Naive thymus-derived CD8-positive, alpha-beta T cell (primary cell): ENCODE measurements at regions of chr1 and their contacts with region 1.

Region 1: DNA sequence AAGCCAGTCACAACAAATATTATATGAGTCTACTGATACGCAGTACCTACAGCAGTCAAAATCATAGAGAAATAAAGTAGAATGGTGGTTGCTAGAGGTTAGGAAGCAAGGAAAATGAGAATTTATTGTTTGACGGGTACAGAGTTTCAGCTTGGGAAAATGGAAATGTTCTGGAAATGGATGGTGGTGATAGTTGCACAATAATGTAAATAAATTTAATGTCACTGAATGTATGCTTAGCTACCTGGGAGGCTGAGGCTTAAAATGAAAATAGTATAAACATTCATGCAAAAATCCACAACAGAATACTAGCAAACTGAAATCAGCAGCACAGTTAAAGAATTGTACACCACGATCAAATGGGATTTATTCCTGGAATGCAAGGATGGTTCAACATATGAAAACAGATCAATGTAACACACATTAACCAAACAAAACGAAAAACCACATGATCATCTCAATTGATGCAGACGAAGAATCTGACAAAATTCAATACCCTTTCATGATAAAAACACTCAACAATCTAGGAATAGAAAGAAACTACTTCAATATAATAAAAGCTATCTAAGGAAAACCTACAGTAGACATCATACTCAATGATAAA is 10.7 kb downstream of the TUT4 start:
- DNase-seq: peak in 1 of 10 donors; percentile 4
- ATAC-seq: no peak
- H3K4me3 Mint-ChIP-seq: no peak overlapping the region
- H3K27ac Mint-ChIP-seq: peak overlapping the region in 3 of 10 donors; percentile 34 to 66 (median 37)
- H3K4me1 Mint-ChIP-seq: peaks cover 14 to 45% (median 30%) of the 10 kb centered on the region in 4 donors
- H3K27me3 Mint-ChIP-seq: no peaks in the 10 kb centered on the region

Region 2: GRCh38 chr1:52531249-52531872 is 10.8 kb before region 1 on chr1:
- POLR2A ChIA-PET with region 1: no interaction called
- DNase-seq: no peak
- ATAC-seq: no peak
- H3K4me3 Mint-ChIP-seq: no peak overlapping the region
- H3K27ac Mint-ChIP-seq: peak overlapping the region in 2 of 10 donors; percentile 22 to 67
- H3K4me1 Mint-ChIP-seq: peaks cover 16 to 65% (median 45%) of the 10 kb centered on the region in 4 donors
- H3K27me3 Mint-ChIP-seq: no peaks in the 10 kb centered on the region

Region 3: GRCh38 chr1:52552505-52553361 is 10.5 kb after region 1 on chr1 and contains the start of gene TUT4:
- POLR2A ChIA-PET with region 1: interaction called, 15 read pairs
- DNase-seq: peak in 7 of 10 donors; percentile 61 to 88 (median 70)
- ATAC-seq: peak; percentile 51 to 55
- H3K4me3 Mint-ChIP-seq: peak within 1 kb of the TSS in 8 of 10 donors; percentile 62 to 86 (median 78)
- H3K27ac Mint-ChIP-seq: peak within 1 kb of the TSS; percentile 72 to 95 (median 87)
- H3K4me1 Mint-ChIP-seq: peaks cover 21 to 40% (median 38%) of the 10 kb centered on the region in 4 donors
- H3K27me3 Mint-ChIP-seq: no peaks in the 10 kb centered on the region
- polyA plus RNA-seq, gene TUT4: 31.6 to 40.9 (median 32.7) TPM

Region 4: DNA sequence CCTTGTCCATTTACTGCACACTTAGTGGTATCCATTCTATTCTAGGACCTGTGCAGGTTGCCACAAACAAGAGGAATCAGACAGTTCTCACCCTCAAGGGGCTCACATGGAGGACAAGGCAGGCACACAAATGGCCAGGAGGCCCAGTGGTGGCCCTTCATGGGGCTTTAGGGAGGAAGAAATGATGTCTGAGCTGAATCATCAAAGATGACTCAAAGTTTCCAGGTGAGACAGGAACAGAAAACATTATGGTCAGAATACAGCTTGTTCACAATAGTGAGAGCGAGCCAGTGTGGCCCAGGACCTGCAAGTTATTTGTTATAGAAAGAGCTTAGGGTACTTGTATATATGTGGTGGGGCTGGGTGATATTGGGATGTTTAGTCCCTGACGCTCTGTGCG is 117.2 kb after region 1 on chr1:
- POLR2A ChIA-PET with region 1: no interaction called
- DNase-seq: no peak
- ATAC-seq: no peak
- H3K4me3 Mint-ChIP-seq: no peak overlapping the region
- H3K27ac Mint-ChIP-seq: peak overlapping the region; percentile 51 to 86 (median 68)
- H3K4me1 Mint-ChIP-seq: peaks cover 9 to 33% (median 18%) of the 10 kb centered on the region in 4 donors
- H3K27me3 Mint-ChIP-seq: no peaks in the 10 kb centered on the region